Right lobe of liver (tissue), 6 donors: ENCODE measurements at regions of chr20 and their contacts with region 1.

Region 1: DNA sequence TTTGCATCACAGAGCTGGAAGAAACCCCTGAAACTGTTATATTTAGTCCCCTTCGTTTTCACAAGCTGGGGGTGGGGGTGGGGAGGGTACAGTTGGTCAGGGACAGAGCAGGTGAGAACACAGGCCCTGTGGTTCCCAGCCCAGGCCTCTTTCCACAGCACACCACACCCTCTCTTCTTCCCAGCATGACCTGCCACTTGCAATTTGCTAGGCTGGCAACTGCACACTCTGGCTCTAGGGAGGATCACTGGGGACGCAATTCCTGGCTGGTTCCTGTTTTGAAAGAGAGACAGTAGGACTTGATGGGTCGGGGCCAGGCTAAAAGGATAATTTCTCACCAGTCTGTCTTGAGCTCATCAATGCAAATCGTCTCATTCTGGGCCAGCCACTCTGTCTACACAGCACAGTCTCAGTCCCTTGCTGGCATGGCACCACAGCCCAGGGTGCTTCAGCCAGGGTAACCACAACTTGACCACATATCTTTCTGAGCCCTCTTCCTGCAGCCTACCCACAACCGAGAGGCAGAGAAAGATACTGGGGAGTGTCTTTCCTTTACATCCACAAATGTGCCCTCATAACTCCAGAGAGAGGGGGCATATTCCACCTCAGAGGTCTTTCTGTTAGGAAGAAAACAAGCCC is 41.7 kb upstream of the EMILIN3 start:
- DNase-seq: no peak
- ATAC-seq: peak in 1 of 4 donors; percentile 9
- H3K4me3 ChIP-seq: no peak overlapping the region
- H3K27ac ChIP-seq: no peak overlapping the region
- H3K4me1 ChIP-seq: no peaks in the 10 kb centered on the region
- H3K27me3 ChIP-seq: no peaks in the 10 kb centered on the region
- CTCF ChIP-seq: no peak
- POLR2A ChIP-seq: no peak

Region 2: GRCh38 chr20:41329435-41330342 is 78.6 kb before region 1 on chr20:
- intact Hi-C with region 1: no loop called
- DNase-seq: peak in 2 of 3 donors; percentile 60 to 62
- ATAC-seq: peak; percentile 86 to 97 (median 94)
- H3K4me3 ChIP-seq: no peak overlapping the region
- H3K27ac ChIP-seq: peak overlapping the region; percentile 36 to 47 (median 39)
- H3K4me1 ChIP-seq: no peaks in the 10 kb centered on the region
- H3K27me3 ChIP-seq: no peaks in the 10 kb centered on the region
- CTCF ChIP-seq: no peak
- POLR2A ChIP-seq: no peak

Region 3: DNA sequence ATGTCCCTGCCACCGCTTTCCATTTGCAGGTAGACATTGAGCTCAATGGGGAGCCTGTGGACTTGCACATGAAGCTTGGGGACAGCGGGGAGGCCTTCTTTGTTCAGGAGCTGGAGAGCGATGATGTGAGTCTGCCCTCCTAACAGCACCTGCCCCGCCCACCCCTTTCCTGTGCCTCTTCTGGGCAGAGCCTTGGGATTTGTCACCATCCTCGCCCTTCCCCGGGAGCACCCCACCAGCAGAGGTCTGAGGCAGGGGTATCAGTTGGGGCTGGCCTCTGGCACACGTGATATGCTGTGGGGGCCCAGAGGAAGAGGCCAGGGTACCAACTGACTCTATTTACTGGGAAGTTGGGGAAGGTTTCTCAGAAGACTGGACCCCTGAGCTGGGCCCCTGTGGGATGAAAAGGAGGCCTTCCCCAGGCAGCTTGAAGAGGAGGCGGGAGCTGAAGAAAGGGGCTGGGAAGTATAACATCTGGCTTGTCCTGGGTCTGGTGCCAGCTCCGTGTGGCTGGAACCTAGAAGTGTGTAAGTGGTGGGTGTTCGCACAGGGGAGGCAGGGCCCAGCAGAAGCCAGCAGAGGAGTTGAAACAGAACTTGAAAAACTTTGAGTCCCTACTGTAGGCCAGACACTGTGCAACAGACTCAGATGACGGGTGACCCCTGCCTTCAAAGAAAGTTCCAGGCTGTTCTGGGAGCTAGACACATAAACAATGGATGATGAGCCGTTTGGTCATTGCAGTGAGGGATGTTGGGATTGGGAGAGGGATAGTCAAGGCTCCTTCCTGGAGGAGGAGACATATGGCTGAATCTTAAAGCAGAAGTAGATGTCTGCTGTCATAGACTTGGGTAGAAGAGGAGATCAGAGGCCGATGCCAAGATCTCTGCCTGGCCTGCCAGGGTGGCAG is 60.5 kb before region 1 on chr20:
- intact Hi-C with region 1: no loop called
- DNase-seq: no peak
- ATAC-seq: no peak
- H3K4me3 ChIP-seq: no peak overlapping the region
- H3K27ac ChIP-seq: no peak overlapping the region
- H3K4me1 ChIP-seq: no peaks in the 10 kb centered on the region
- H3K27me3 ChIP-seq: no peaks in the 10 kb centered on the region
- CTCF ChIP-seq: no peak
- POLR2A ChIP-seq: no peak

Region 4: DNA sequence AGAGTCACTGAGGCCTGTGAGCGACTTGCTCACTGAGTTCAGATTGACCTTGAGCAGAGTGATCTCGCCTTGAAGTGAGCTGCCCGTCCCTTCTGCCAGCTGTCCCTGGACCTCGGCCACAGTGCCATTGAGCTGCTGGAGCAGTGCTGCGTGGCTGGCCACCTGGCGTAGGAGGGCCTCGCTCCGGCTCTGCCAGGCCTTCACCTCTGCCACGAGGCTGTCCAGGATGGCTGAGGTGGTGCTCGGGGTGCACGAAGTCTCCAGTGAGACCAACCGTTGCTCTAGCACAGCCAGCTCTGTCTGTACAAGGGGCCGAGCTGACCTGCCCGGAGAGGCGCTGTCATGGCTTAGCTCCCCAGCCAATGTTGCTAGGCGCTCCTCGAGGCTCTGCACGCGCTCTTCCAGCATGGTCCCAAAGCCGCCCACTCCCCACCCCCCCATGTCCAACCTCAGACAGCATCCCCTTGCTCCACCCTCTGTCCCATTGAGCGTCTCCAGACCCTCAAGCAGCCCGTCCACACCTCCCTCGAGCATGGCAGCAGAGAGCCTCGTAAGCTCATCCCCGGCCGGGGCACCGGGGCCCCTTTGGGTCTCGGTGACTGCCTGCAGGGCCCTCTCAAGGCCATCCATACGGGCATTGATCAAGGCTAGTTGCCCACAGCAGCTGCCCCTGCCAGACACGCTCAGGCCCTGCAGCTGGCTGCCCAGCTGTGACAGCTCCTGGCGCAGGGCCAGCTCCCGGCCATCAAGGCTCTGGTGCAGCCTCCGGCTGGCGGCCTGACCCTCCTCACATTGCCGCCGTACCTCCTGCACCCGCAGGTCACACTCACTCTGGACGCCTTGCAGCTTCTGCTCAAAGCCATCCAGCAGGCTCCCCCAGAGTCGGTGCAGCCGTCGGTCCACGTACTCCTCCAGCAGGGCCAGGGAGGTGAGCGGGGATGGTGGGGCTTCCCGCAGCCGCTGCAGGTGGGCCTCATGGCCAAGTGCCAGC is 46.2 kb before region 1 on chr20:
- intact Hi-C with region 1: loop called in 1 of 2 experiments (anchors 5 kb)
- DNase-seq: no peak
- ATAC-seq: no peak
- H3K4me3 ChIP-seq: no peak overlapping the region
- H3K27ac ChIP-seq: no peak overlapping the region
- H3K4me1 ChIP-seq: peaks cover 0 to 16% (median 7%) of the 10 kb centered on the region in 4 donors
- H3K27me3 ChIP-seq: no peaks in the 10 kb centered on the region
- CTCF ChIP-seq: no peak
- POLR2A ChIP-seq: no peak

Region 5: GRCh38 chr20:41746634-41747033 is 338.4 kb after region 1 on chr20:
- intact Hi-C with region 1: no loop called
- DNase-seq: no peak
- ATAC-seq: peak in 3 of 4 donors; percentile 36 to 60 (median 52)
- H3K4me3 ChIP-seq: no peak overlapping the region
- H3K27ac ChIP-seq: no peak overlapping the region
- H3K4me1 ChIP-seq: no peaks in the 10 kb centered on the region
- H3K27me3 ChIP-seq: no peaks in the 10 kb centered on the region
- CTCF ChIP-seq: peak in 2 of 4 donors; percentile 32 to 37
- POLR2A ChIP-seq: no peak